ENCODE measurements at regions of chr9 and their contacts with region 1.

Region 1: DNA sequence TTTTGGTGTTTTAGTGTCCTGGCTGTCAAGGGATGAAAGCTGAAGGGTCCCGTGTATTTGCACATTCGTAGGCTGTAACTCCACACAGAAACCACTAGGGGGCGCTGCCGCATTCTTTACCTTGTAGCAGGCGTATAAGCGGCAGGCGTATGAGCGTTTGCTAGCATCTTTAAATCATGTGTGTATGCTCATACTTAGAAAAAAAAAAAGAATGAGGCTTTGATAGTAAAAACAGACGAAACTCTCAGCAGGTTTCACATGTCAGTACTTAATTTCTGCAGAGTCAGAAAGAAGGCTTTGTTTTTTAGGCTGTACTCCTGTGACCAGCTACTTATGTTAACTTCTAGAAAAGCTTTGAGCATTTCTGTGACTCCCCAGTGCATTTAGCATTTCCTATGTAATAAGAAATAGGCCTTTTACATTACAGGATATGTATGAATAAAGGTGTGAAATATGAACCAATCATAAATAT is 218.8 kb upstream of the ADAMTSL1 start:
- DNase-seq: peak; percentile 65
- ATAC-seq: peak; percentile 70
- H3K4me3 ChIP-seq: no peak overlapping the region
- H3K4me3 Mint-ChIP-seq: no peak overlapping the region
- H3K27ac ChIP-seq: no peak overlapping the region
- H3K27ac Mint-ChIP-seq: no peak overlapping the region
- H3K4me1 ChIP-seq: no peaks in the 10 kb centered on the region
- H3K4me1 Mint-ChIP-seq: no peaks in the 10 kb centered on the region
- H3K27me3 ChIP-seq: peaks cover 0 to 5% (median 0%) of the 10 kb centered on the region in 4 experiments
- H3K27me3 Mint-ChIP-seq: peaks cover 8% of the 10 kb centered on the region
- CTCF ChIP-seq: peak; percentile 97

Region 2: DNA sequence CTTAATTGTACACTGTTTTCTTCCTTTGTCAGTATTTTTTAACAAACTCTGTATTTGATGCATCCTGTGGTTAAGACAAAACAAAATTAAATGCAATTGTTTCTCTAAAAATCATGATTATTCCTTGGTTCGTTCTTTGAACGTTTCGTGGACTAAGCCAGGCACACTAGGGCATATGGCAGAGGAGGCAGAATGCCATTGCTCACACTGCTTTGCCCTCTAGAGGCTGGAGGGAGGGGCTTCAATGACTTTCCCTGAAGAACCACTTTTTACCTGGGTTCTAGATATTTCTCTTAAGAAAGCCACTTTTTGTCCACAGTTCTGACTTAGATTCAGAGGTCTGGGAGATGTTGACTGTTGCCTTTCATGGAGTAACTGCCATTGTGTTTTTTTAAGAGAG is 17.4 kb before region 1 on chr9:
- CTCF ChIA-PET with region 1: interaction called, 10 read pairs
- POLR2A ChIA-PET with region 1: no interaction called
- intact Hi-C with region 1: no loop called
- DNase-seq: no peak
- ATAC-seq: no peak
- H3K4me3 ChIP-seq: no peak overlapping the region
- H3K4me3 Mint-ChIP-seq: no peak overlapping the region
- H3K27ac ChIP-seq: no peak overlapping the region
- H3K27ac Mint-ChIP-seq: no peak overlapping the region
- H3K4me1 ChIP-seq: no peaks in the 10 kb centered on the region
- H3K4me1 Mint-ChIP-seq: no peaks in the 10 kb centered on the region
- H3K27me3 ChIP-seq: no peaks in the 10 kb centered on the region
- H3K27me3 Mint-ChIP-seq: peaks cover 3% of the 10 kb centered on the region
- CTCF ChIP-seq: no peak

Measured in B cell (primary cell).